Breast epithelium (tissue), 4 donors: ENCODE measurements at regions of chr7 and their contacts with region 1.

Region 1: GRCh38 chr7:158050978-158051651 is 536.5 kb downstream of the PTPRN2 start:
- DNase-seq: peak in 1 of 2 donors; percentile 17
- H3K4me3 ChIP-seq: no peak overlapping the region
- H3K27ac ChIP-seq: no peak overlapping the region
- H3K4me1 ChIP-seq: no peaks in the 10 kb centered on the region
- H3K27me3 ChIP-seq: peaks cover 0 to 10% of the 10 kb centered on the region in 2 donors
- CTCF ChIP-seq: no peak
- POLR2A ChIP-seq: no peak

Region 2: DNA sequence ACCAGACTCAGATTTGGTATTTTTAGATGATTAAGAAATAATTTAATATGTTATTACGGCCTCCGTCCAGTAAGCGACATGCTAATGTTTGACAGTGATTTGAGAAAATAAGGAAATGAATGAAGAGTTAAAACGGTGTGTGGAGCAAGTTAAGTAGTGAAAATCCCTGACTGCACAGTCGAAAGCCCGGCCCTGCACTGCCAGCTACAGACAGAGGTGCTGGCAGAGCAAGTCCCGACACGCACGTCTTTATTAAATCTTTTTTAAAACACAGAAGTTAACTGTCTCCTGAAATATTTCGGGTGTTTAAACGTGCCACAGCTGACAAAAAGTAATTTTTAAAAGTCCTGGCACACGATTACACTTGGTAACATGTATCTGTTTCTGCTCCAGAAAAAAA is 1704.0 kb before region 1 on chr7:
- intact Hi-C with region 1: loop called (anchors 5 kb)
- DNase-seq: peak in 1 of 2 donors; percentile 55
- H3K4me3 ChIP-seq: peak overlapping the region in 2 of 3 donors; percentile 34 to 41
- H3K27ac ChIP-seq: no peak overlapping the region
- H3K4me1 ChIP-seq: no peaks in the 10 kb centered on the region
- H3K27me3 ChIP-seq: no peaks in the 10 kb centered on the region
- CTCF ChIP-seq: no peak
- POLR2A ChIP-seq: no peak

Region 3: DNA sequence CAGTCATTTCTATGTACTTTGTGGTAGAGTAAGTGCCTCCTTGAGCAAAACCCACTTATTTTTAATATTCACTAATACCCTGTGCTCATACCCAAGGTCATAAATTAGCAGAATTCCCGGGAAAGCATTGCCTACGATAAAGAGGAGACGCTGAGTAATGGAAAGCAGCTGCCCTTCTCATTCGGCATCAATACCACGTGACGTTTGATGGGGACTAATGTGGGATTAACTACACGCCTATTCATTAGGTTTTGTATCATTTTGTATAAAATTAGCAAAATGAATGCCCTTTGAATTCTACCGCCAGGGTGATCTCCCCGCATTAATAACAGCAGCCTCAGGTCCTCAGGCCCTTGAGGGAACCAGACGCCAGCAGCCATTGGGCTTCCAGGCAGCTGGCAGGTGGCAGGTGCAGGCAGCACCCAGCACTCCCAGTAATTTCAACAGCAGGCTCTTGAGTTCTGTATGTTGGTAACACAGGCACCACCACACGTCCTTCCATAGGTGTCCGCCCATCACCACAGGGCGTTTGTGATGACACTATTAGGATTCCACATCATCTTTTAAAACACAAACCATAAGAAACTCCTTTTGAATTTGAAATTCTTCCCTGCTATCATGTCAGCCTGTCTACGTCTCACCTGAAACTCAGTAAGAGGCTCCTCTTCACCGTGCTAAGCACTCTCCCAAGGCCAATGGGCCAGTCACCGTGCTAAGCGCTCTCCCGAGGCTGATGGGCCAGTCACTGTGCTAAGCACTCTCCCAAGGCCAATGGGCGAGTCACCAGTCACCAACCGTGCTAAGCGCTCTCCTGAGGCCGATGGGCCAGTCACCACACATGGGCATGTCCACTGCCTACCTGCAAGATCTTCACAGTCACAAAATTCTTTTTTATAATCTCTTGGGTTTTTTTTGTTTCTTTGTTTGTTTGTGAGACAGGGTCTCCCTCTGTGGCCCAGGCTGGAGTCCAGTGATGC is 27.1 kb after region 1 on chr7:
- intact Hi-C with region 1: loop called (anchors 1 kb)
- DNase-seq: no peak
- H3K4me3 ChIP-seq: no peak overlapping the region
- H3K27ac ChIP-seq: no peak overlapping the region
- H3K4me1 ChIP-seq: no peaks in the 10 kb centered on the region
- H3K27me3 ChIP-seq: peaks cover 0 to 15% of the 10 kb centered on the region in 2 donors
- CTCF ChIP-seq: no peak
- POLR2A ChIP-seq: no peak